Activated CD4-positive, alpha-beta memory T cell treated with anti-CD3 and anti-CD28 coated beads for 36 hours (primary cell): ENCODE measurements at regions of chr14 and their contacts with region 1.

Region 1: GRCh38 chr14:58637391-58638230 is at the start of gene DACT1:
- DNase-seq: peak; percentile 72
- H3K4me3 Mint-ChIP-seq: peak within 1 kb of the TSS; percentile 79
- H3K27ac Mint-ChIP-seq: peak within 1 kb of the TSS; percentile 53
- H3K4me1 Mint-ChIP-seq: peaks cover 33% of the 10 kb centered on the region
- H3K27me3 Mint-ChIP-seq: peaks cover 37% of the 10 kb centered on the region
- total RNA-seq, gene DACT1: 4.3 to 4.7 TPM

Region 2: DNA sequence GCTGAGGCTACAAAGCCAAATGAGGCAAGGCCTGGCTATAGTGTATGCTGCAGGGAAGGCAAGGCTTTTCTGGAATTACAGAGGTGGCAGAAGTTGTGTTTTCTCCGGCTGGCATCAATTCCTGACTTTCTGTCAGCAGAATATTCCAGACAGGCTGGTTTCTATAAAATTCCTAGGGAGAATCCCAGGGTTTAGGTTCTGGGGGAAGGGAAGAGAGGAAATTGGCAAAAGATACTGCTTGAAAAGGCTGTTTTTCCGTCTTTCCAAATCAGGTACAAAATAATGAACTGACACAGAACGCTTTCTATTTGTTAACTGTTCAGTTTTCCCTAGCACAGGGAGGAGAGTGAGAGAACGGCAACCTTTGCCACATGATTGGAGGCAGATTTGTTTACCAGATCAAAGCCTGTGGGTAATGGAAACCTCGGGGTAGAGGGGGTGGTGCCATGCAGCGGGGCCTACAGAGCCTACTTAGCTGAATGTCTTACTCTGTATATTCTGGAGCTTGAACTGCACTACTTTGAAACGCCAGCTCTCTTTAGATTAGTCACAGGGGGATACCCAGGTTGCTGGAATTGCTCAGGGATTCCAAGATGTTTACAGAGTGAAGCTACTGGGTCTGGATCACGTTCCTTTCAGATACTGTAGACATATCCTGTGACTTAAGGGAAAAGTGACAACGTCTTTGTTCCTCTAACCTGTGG is 65.7 kb before region 1 on chr14:
- CTCF ChIA-PET with region 1: interaction called, 3 read pairs
- POLR2A ChIA-PET with region 1: no interaction called
- intact Hi-C with region 1: loop called (anchors 1 kb)
- DNase-seq: peak; percentile 77
- H3K4me3 Mint-ChIP-seq: peak overlapping the region; percentile 11
- H3K27ac Mint-ChIP-seq: peak overlapping the region; percentile 87
- H3K4me1 Mint-ChIP-seq: peaks cover 39% of the 10 kb centered on the region
- H3K27me3 Mint-ChIP-seq: no peaks in the 10 kb centered on the region

Region 3: DNA sequence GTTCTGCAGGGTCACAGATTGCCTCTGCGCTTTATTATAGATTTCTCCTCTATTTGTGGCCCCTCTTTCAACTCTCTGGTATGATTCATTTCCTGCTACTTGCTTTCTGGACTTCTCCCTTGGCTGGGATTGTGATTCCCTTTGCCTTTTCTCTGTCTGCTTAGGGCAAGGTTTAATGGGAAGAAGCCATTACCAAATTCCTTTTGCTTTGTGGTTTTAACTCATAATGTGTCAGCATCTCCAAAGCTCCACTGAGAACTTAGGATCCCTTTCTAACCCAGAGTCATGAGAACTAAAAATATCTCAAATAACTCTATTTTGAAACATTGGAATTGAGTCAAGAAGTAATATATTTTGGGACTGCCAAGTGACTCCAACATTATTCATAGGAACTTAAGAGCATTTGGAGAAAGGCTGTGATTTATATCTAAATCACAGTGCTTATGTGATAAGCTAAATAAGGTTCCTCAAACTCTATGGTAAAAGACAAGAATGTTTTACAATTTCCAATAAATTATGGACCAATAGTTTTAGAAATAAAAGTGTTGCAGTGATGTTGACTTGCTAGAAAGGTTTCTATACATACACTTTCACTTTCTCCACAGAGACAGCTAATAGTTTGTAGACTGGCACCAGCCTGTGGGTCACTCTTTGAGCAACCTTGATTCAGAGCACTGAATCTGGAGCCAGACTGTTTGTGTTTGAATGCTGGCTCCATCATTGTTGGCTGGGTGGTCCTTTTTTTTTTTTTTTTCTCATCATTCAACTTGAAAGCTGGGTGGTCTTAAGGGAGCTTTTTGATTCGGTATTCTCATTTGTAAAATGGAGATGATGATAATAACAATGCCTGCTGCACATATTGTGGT is 94.1 kb after region 1 on chr14:
- CTCF ChIA-PET with region 1: no interaction called
- POLR2A ChIA-PET with region 1: no interaction called
- intact Hi-C with region 1: loop called (anchors 10 kb)
- DNase-seq: no peak
- H3K4me3 Mint-ChIP-seq: no peak overlapping the region
- H3K27ac Mint-ChIP-seq: no peak overlapping the region
- H3K4me1 Mint-ChIP-seq: peaks cover 18% of the 10 kb centered on the region
- H3K27me3 Mint-ChIP-seq: peaks cover 11% of the 10 kb centered on the region

Region 4: GRCh38 chr14:59028476-59029202 is 391.0 kb after region 1 on chr14:
- CTCF ChIA-PET with region 1: no interaction called
- POLR2A ChIA-PET with region 1: no interaction called
- intact Hi-C with region 1: loop called (anchors 10 kb)
- DNase-seq: peak; percentile 53
- H3K4me3 Mint-ChIP-seq: no peak overlapping the region
- H3K27ac Mint-ChIP-seq: no peak overlapping the region
- H3K4me1 Mint-ChIP-seq: peaks cover 3% of the 10 kb centered on the region
- H3K27me3 Mint-ChIP-seq: peaks cover 14% of the 10 kb centered on the region

Region 5: GRCh38 chr14:59055439-59056045 is 417.9 kb after region 1 on chr14:
- CTCF ChIA-PET with region 1: interaction called, 3 read pairs
- POLR2A ChIA-PET with region 1: no interaction called
- intact Hi-C with region 1: loop called (anchors 1 kb)
- DNase-seq: peak; percentile 16
- H3K4me3 Mint-ChIP-seq: no peak overlapping the region
- H3K27ac Mint-ChIP-seq: no peak overlapping the region
- H3K4me1 Mint-ChIP-seq: no peaks in the 10 kb centered on the region
- H3K27me3 Mint-ChIP-seq: peaks cover 5% of the 10 kb centered on the region